Heart right ventricle (tissue), 16 donors: ENCODE measurements at regions of chr16 and their contacts with region 1.

Region 1: GRCh38 chr16:9499941-9500593 is 408.6 kb downstream of the HAPSTR1 start:
- DNase-seq: peak in 1 of 2 donors; percentile 20
- ATAC-seq: peak in 1 of 8 donors; percentile 82
- H3K4me3 ChIP-seq: no peak overlapping the region
- H3K27ac ChIP-seq: no peak overlapping the region
- H3K4me1 ChIP-seq: no peaks in the 10 kb centered on the region
- H3K27me3 ChIP-seq: peaks cover 0 to 4% (median 0%) of the 10 kb centered on the region in 7 donors
- CTCF ChIP-seq: no peak

Region 2: DNA sequence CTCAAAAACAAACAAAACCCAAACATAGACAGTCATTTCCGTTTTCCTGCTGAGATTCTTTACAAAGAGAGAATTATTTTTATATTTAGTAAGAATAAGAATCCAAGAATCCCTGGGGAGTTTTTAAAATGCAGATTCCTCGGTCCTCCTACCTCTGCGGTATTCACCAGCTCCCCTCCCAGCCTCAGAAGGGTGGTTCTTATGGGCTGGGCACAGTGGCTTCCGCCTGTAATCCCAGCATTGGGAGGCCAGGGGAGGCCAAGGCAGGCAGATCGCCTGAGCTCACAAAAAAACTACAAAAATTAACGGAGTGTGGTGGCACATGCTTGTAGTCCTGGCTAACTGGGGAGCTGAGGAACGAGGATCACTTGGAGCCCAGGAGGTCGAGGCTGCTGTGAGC is 509.6 kb before region 1 on chr16:
- intact Hi-C with region 1: loop called in 1 of 10 experiments (anchors 5 kb)
- DNase-seq: no peak
- ATAC-seq: no peak
- H3K4me3 ChIP-seq: no peak overlapping the region
- H3K27ac ChIP-seq: no peak overlapping the region
- H3K4me1 ChIP-seq: no peaks in the 10 kb centered on the region
- H3K27me3 ChIP-seq: peaks cover 0 to 6% (median 0%) of the 10 kb centered on the region in 7 donors
- CTCF ChIP-seq: no peak

Region 3: GRCh38 chr16:9311303-9311954 is 188.6 kb before region 1 on chr16:
- intact Hi-C with region 1: loop called in 1 of 10 experiments (anchors 10 kb)
- DNase-seq: no peak
- ATAC-seq: peak in 2 of 8 donors; percentile 52 to 75
- H3K4me3 ChIP-seq: no peak overlapping the region
- H3K27ac ChIP-seq: no peak overlapping the region
- H3K4me1 ChIP-seq: peaks cover 0 to 16% (median 0%) of the 10 kb centered on the region in 9 donors
- H3K27me3 ChIP-seq: no peaks in the 10 kb centered on the region
- CTCF ChIP-seq: no peak

Region 4: GRCh38 chr16:9533042-9533441 is 33.0 kb after region 1 on chr16:
- intact Hi-C with region 1: loop called in 1 of 10 experiments (anchors 2 kb)
- DNase-seq: no peak
- ATAC-seq: no peak
- H3K4me3 ChIP-seq: no peak overlapping the region
- H3K27ac ChIP-seq: no peak overlapping the region
- H3K4me1 ChIP-seq: no peaks in the 10 kb centered on the region
- H3K27me3 ChIP-seq: no peaks in the 10 kb centered on the region
- CTCF ChIP-seq: no peak

Region 5: DNA sequence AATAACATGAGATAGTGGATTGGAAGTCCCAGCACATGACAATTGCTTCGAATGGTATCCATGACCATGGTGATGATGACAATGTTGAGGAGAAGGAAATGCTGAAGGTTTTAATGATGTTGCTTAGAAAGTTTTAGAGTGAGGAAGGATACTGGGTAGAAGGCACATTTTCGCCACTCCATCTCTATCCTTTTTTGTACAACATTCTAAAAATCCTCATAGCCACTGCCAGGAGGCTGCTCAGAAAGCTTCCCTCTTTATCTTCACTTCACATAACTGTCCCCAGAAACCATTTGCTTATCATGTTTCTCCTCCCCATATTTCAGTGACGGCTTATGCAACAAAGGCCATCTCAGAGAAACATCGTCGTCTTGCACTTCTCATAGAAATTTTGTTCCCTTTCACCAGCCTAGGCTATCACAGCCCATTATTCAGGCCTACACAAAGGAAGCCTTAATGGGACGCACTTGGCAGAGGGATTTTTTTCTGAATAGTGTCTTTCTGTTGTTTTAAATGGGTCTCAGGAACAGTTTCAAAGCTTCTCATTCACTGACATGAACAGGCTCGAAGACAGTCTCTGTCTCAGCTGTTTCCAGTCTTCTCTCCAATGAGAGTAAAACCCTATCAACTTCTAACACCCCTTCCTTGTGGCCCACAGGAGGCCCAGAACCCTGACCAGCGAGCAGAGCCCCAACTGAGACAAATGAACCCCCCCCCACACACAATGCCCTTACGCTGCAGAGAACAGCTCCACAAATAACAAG is 98.1 kb after region 1 on chr16:
- intact Hi-C with region 1: no loop called
- DNase-seq: no peak
- ATAC-seq: no peak
- H3K4me3 ChIP-seq: no peak overlapping the region
- H3K27ac ChIP-seq: no peak overlapping the region
- H3K4me1 ChIP-seq: no peaks in the 10 kb centered on the region
- H3K27me3 ChIP-seq: peaks cover 0 to 20% (median 4%) of the 10 kb centered on the region in 7 donors
- CTCF ChIP-seq: no peak

Region 6: GRCh38 chr16:9761870-9762269 is 261.8 kb after region 1 on chr16:
- intact Hi-C with region 1: no loop called
- DNase-seq: no peak
- ATAC-seq: no peak
- H3K4me3 ChIP-seq: no peak overlapping the region
- H3K27ac ChIP-seq: no peak overlapping the region
- H3K4me1 ChIP-seq: peaks cover 0 to 7% (median 0%) of the 10 kb centered on the region in 9 donors
- H3K27me3 ChIP-seq: no peaks in the 10 kb centered on the region
- CTCF ChIP-seq: peak in 1 of 9 donors; percentile 10